ENCODE measurements at regions of chr2 and their contacts with region 1.

Region 1: DNA sequence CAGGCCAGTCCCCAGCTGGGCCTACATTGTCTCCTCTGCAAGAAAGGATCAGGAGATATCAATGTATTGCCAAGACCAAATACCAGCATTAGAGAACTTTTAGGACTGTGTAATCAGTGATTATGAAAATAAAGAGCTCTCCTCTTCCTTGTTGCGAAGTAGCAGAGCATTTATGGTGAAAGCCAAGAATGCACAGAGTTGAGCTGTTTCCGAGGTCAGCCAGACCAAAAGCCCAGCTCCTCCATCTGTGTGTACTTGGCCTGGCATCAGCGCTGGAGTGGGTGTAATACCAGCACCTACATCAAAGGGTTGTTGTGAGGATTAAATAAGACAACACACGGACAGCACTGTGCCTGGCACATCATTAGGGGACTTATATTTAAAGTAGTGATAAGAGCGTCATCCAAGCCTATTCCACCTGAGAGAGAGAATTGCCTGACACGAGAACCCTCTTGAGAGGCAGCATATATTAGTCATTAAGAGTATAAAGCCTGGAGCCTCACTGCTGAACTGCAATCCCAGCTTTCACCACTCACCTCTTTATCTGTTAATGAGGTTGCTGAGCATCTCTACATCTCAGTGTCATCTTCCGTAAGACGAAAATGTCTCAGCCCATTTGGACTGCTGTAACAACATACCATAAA is 7.4 kb upstream of the SLC16A14 start:
- DNase-seq: no peak
- ATAC-seq: no peak
- H3K4me3 ChIP-seq: no peak overlapping the region
- H3K27ac ChIP-seq: no peak overlapping the region
- H3K4me1 ChIP-seq: peaks cover 0 to 3% (median 0%) of the 10 kb centered on the region in 12 donors
- H3K27me3 ChIP-seq: no peaks in the 10 kb centered on the region
- CTCF ChIP-seq: no peak
- POLR2A ChIP-seq: no peak

Region 2: GRCh38 chr2:229800997-229801754 is 274.9 kb before region 1 on chr2:
- intact Hi-C with region 1: no loop called
- DNase-seq: peak in 4 of 5 donors; percentile 30 to 58 (median 40)
- ATAC-seq: peak in 3 of 4 donors; percentile 41 to 61 (median 56)
- H3K4me3 ChIP-seq: no peak overlapping the region
- H3K27ac ChIP-seq: peak overlapping the region in 1 of 12 donors; percentile 7
- H3K4me1 ChIP-seq: peaks cover 0 to 31% (median 12%) of the 10 kb centered on the region in 12 donors
- H3K27me3 ChIP-seq: no peaks in the 10 kb centered on the region
- CTCF ChIP-seq: peak; percentile 59 to 83 (median 75)
- POLR2A ChIP-seq: no peak

Region 3: GRCh38 chr2:230124757-230125431 is 48.8 kb after region 1 on chr2:
- intact Hi-C with region 1: loop called in 1 of 10 experiments (anchors 10 kb)
- DNase-seq: peak; percentile 14 to 63 (median 47)
- ATAC-seq: peak in 3 of 4 donors; percentile 39 to 60 (median 55)
- H3K4me3 ChIP-seq: peak overlapping the region in 1 of 12 donors; percentile 7
- H3K27ac ChIP-seq: peak overlapping the region in 1 of 12 donors; percentile 7
- H3K4me1 ChIP-seq: peaks cover 0 to 41% (median 6%) of the 10 kb centered on the region in 12 donors
- H3K27me3 ChIP-seq: no peaks in the 10 kb centered on the region
- CTCF ChIP-seq: no peak
- POLR2A ChIP-seq: no peak

Measured in heart left ventricle (tissue), 16 donors.